ENCODE measurements at regions of chr14 and their contacts with region 1.

Region 1: GRCh38 chr14:60184146-60184904 is 19.1 kb upstream of the DHRS7 start:
- DNase-seq: no peak
- ATAC-seq: peak; percentile 51

Region 2: GRCh38 chr14:59964251-59965007 is 219.9 kb before region 1 on chr14:
- intact Hi-C with region 1: loop called in 1 of 2 experiments (anchors 2 kb)
- DNase-seq: no peak
- ATAC-seq: peak; percentile 6

Region 3: GRCh38 chr14:60064491-60065072 is 119.7 kb before region 1 on chr14:
- intact Hi-C with region 1: loop called in 1 of 2 experiments (anchors 2 kb)
- DNase-seq: no peak
- ATAC-seq: no peak

Measured in left colon (tissue), 2 donors.